Activated CD8-positive, alpha-beta memory T cell treated with anti-CD3 and anti-CD28 coated beads, Interleukin-2, amount 10 ng/mL, durations not matched to agents 7 days and 5 days (primary cell): ENCODE measurements at regions of chr15 and their contacts with region 1.

Region 1: DNA sequence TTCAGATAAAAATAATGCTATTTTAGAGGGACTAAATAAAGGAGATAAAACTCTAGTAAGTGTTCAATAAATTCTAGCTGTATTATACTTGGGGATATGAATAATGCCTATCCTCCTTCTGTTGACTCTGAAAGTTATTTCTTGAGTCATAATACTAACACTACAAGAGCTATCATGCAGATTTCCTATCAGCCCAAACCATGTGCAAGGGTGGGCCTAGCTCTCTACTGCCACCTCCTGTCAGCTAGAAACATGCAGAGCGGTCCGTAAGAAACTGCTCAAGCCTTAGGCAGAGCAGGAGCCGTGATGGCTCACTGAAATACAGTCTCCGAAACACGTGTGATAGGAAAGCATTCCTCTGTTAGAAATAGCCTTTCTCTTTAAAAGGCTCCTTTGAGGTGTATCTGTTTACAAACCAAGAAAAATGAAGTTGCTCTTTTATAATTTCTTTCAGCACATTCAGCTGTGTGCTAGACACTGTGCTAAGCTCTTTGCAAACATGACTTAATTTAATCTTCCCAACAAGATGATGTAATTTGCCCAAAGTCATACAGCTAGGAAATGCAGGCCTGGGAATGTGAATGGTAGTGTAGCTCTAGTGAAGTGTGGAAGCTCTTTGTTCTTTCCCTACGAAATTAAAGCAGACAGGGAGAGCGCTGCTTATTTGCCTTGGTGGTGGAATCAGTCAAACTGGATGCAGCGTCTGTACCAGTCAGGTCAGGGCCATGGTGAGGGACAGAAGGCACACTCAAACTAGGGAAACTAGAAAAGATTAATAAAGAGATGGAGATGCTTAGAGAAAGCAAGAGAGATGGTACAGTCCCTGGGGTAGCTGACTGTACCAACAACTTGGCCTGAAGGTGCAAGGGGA is 43.1 kb downstream of the MTHFS start:
- DNase-seq: peak; percentile 79
- ATAC-seq: peak; percentile 98
- H3K4me3 Mint-ChIP-seq: no peak overlapping the region
- H3K27ac Mint-ChIP-seq: no peak overlapping the region
- H3K4me1 Mint-ChIP-seq: peaks cover 13% of the 10 kb centered on the region
- H3K27me3 Mint-ChIP-seq: no peaks in the 10 kb centered on the region

Region 2: DNA sequence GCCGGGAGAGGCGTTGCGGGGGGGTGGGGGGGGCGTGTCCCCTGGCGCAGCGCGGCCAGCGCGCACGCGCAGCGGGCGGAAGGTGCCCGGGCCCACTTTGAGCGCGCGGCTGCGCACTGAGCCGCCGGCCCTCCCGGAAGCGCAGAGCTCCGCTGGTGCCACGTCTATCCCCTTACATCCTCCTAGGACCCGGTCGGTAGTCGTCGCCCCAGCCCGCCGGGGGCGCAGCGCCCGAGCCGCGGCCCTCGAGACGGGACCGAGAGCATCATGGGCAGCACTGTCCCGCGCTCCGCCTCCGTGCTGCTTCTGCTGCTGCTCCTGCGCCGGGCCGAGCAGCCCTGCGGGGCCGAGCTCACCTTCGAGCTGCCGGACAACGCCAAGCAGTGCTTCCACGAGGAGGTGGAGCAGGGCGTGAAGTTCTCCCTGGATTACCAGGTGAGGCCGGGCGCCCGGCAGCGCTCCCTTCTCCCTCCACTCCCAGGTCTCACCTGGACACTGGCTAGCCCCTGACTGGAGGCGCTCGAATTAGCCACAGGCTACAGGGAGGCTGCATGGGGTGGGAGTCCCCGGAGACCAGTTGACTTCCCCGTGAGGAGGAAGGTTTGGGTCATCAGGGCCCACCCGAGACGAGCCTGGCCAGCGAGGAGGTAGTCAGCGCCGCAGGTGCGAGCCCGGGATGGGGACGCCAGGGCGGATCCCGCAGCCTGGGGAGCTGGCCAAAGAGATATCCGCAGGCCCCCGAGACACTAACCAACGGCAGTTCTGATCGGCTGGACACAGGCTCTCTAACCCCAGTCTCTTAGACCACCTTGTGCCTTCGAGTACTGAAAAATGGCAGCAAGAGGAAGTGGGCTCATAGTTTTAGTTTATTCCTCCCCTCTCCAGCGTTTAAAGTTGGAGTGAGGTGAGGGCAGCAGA is 542.5 kb before region 1 on chr15 and contains the start of gene TMED3:
- CTCF ChIA-PET with region 1: interaction called, 10 read pairs
- DNase-seq: peak; percentile 89
- ATAC-seq: peak; percentile 98
- H3K4me3 Mint-ChIP-seq: peak within 1 kb of the TSS; percentile 84
- H3K27ac Mint-ChIP-seq: peak within 1 kb of the TSS; percentile 75
- H3K4me1 Mint-ChIP-seq: peaks cover 25% of the 10 kb centered on the region
- H3K27me3 Mint-ChIP-seq: peaks cover 36% of the 10 kb centered on the region
- total RNA-seq, gene TMED3: 35.3 to 41.8 TPM

Region 3: GRCh38 chr15:79339564-79340314 is 514.0 kb before region 1 on chr15:
- CTCF ChIA-PET with region 1: interaction called, 23 read pairs
- DNase-seq: no peak
- ATAC-seq: no peak
- H3K4me3 Mint-ChIP-seq: no peak overlapping the region
- H3K27ac Mint-ChIP-seq: no peak overlapping the region
- H3K4me1 Mint-ChIP-seq: no peaks in the 10 kb centered on the region
- H3K27me3 Mint-ChIP-seq: no peaks in the 10 kb centered on the region

Region 4: DNA sequence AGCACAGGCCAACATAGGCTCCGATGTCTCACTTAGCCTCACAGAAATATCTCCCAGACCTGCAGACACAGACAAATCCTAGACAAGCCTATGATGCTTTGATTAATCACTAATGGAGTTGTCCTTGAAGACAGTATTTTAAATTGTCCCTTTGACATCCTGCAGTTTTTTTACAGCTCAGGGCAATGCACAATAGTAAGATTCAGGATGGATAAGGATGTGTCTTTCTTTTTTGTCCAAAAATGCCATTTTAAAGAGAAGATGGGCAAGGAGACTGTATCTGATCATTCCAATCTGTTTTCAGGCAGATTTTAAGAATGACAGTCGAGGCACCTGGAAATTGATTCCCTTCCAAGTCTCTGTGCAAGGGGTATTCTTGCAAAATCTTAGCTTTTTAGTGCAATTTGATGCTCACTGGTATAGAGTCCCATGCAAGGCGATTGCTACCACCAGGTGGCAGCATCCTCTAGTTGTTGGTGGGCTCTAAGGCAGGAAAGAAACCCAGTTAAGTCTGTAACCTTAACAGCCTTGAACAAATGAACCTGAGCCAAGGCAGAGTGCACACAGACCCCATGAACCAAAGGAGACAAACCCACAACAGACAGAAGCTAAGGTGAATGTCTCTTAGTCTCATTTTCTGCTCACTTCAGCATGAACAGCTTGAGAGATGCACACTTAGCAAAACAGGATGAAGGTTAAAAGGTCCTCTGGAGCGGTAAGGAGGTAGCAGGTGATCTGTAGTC is 472.8 kb before region 1 on chr15:
- CTCF ChIA-PET with region 1: interaction called, 26 read pairs
- DNase-seq: peak; percentile 81
- ATAC-seq: peak; percentile 91
- H3K4me3 Mint-ChIP-seq: no peak overlapping the region
- H3K27ac Mint-ChIP-seq: no peak overlapping the region
- H3K4me1 Mint-ChIP-seq: peaks cover 3% of the 10 kb centered on the region
- H3K27me3 Mint-ChIP-seq: no peaks in the 10 kb centered on the region

Region 5: DNA sequence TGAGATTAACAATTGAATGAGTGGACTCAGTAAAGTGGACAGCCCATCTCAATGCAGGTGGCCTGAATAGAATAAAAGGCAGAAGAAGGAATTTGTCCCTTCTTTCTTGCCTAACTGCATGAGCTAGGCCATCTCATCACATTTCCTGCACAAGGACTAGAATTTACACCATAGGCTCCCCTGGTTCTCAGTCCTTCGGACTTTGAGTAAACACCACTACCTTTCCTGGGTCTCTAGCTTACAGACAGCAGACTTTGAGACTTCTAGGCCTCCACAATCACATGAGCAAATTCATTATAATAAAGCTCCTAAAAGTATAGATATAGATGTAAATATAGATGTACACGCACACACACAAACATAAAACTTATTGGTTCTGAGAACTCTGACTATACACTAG is 14.9 kb after region 1 on chr15:
- CTCF ChIA-PET with region 1: interaction called, 12 read pairs
- DNase-seq: no peak
- ATAC-seq: no peak
- H3K4me3 Mint-ChIP-seq: no peak overlapping the region
- H3K27ac Mint-ChIP-seq: no peak overlapping the region
- H3K4me1 Mint-ChIP-seq: peaks cover 15% of the 10 kb centered on the region
- H3K27me3 Mint-ChIP-seq: no peaks in the 10 kb centered on the region

Region 6: DNA sequence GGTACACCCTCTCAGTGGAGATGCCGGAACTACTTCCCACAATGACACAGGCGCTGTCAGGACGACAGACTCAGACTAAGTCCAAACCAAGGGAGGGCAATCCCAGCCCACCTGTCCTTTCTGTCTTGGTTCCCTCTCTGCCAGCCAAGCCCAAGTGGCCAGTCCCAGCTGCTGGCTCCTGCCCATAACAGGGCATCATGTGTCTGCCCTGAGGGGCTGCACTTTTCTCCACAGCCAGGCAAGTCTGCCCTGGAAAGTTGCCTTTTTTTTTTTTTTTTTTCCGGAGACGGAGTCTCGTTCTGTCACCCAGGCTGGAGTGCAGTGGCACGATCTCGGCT is 137.3 kb after region 1 on chr15:
- CTCF ChIA-PET with region 1: interaction called, 26 read pairs
- DNase-seq: no peak
- ATAC-seq: no peak
- H3K4me3 Mint-ChIP-seq: no peak overlapping the region
- H3K27ac Mint-ChIP-seq: no peak overlapping the region
- H3K4me1 Mint-ChIP-seq: no peaks in the 10 kb centered on the region
- H3K27me3 Mint-ChIP-seq: peaks cover 3% of the 10 kb centered on the region

Region 7: DNA sequence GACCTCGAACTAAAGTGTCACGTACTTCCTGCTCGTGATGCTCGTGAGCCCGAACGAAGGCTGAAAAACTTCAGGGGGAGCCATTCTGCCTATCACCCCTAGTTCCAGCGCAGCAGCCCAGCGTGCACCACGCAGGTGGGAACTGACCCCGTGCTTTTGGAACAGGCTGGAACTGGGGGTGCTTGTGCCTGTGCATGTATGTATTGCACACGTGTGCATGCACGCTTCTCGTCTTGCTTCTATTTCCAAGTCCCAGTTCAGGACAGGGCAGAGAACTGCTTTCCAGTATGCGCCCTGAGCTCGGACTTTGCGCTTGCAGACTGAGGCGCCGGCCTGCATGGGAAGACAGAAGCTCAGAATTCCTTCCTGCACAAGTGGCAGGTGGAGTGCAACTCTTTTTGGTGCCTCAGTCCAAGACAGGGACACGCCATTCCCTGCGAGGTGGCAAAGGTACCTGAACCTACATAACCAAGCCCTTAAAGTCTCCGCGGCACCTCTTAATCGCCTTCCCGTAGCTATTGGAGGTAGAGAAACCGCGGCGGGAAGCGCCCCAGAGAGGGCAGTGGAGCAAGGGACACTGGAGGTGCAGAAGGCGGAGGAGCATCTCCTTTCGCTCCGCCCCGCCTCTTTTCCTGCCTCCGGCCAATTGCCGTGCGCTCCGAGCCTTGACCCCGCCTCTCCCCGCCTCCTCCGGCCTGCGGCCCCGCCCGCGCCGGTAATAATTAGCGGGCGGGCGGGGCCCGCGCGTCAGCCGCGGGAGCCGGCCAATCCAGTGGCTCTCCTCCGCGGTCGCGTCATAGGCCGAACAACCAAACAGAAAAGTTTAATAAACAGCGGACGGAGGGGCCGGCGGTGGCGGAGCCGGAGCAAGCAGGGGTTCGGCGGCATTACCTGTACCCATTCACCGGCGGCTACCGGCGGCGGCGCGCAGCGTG is 205.4 kb after region 1 on chr15 and contains the start of gene ZFAND6:
- CTCF ChIA-PET with region 1: no interaction called
- DNase-seq: peak; percentile 96
- ATAC-seq: peak; percentile 90
- H3K4me3 Mint-ChIP-seq: peak within 1 kb of the TSS; percentile 82
- H3K27ac Mint-ChIP-seq: peak within 1 kb of the TSS; percentile 92
- H3K4me1 Mint-ChIP-seq: peaks cover 54% of the 10 kb centered on the region
- H3K27me3 Mint-ChIP-seq: peaks cover 3% of the 10 kb centered on the region
- total RNA-seq, gene ZFAND6: 36.7 to 42.1 TPM

Region 8: DNA sequence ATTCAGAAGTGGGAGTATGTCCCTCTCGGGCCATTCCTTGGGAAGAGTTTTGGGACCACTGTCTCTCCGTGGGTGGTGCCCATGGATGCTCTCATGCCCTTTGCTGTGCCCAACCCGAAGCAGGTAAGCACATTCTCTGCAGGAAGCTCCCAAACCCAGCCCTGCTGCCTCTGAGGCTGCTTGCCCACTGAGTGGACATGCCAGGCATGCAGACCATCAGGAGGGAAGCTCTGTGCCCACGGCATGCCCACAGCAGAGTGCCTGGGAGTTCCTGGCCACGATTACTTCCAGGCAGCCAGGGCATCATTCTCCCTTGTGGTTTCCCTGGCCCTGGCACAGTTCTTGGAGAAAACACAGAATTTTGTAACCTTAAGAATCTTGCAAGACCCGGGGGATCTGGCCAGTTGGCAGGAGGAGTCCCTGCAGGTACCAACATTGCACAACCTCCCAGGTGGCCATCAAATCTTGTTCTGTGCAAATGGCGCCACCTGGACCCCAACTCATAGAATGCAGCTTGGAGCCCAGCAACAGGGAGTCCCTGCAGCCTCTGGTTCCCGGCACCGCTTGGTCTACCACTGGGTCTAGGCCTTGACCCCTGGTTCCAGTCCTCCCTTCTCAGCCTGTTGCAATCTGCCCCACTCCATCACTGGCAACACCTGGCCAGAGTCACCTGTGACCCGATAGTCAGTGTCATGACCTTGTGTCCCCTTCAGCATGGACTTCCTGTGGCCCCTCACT is 319.5 kb after region 1 on chr15:
- CTCF ChIA-PET with region 1: interaction called, 10 read pairs
- DNase-seq: peak; percentile 83
- ATAC-seq: peak; percentile 89
- H3K4me3 Mint-ChIP-seq: no peak overlapping the region
- H3K27ac Mint-ChIP-seq: peak overlapping the region; percentile 56
- H3K4me1 Mint-ChIP-seq: peaks cover 4% of the 10 kb centered on the region
- H3K27me3 Mint-ChIP-seq: no peaks in the 10 kb centered on the region